ENCODE measurements at regions of chr6 and their contacts with region 1.

Region 1: DNA sequence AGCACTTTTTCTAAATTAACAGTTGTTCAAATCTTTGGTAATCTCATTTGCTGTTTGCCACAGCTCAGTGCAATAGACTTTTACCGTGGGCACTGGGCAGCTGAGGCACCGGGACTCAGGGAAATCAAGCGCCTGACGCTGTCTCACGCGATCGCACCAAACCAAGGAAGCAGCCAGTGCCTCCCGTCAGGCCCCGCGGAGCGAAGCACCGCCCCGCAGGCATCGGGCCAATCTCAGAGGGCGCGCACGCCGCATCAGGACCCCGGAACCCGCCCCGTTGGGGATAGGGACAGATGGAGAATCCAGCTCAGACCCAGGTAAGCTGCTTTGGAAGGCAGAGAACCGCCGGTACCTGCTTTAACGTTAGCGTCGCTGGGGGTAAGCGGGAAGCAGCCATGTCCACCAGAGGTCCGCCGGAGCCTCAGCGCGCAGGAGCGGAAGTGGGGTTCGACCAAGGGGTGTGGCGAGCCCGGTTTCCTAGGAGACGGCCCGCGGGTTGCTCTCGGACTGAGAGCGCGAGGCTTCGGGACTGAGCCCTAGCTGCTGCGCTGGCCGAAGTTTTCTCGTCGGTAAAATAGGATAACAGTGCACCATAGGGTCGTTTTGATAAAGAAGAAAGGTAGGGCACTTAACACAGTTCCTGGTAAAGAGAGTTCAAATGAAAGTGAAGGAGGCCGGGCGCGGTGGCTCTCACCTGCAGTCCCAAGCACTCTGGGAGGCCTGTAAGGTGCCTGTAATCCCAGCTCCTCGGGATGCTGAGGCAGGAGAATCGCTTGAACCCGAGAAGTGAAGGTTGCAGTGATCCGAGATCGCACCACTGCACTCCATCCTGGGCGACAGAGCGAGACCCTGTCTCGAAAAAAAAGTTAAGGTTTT is at the start of gene LYRM2:
- DNase-seq: peak; percentile 95
- H3K4me3 Mint-ChIP-seq: peak within 1 kb of the TSS; percentile 83
- H3K27ac Mint-ChIP-seq: peak within 1 kb of the TSS; percentile 96
- H3K4me1 Mint-ChIP-seq: peaks cover 28% of the 10 kb centered on the region
- H3K27me3 Mint-ChIP-seq: no peaks in the 10 kb centered on the region
- total RNA-seq, gene LYRM2: 15.8 to 18.3 TPM

Region 2: GRCh38 chr6:89352278-89353117 is 286.1 kb before region 1 on chr6 and contains the start of gene UBE2J1:
- CTCF ChIA-PET with region 1: no interaction called
- intact Hi-C with region 1: loop called (anchors 1 kb)
- DNase-seq: peak; percentile 71
- H3K4me3 Mint-ChIP-seq: peak within 1 kb of the TSS; percentile 90
- H3K27ac Mint-ChIP-seq: peak within 1 kb of the TSS; percentile 84
- H3K4me1 Mint-ChIP-seq: peaks cover 66% of the 10 kb centered on the region
- H3K27me3 Mint-ChIP-seq: no peaks in the 10 kb centered on the region
- total RNA-seq, gene UBE2J1: 10.8 to 10.9 TPM

Region 3: DNA sequence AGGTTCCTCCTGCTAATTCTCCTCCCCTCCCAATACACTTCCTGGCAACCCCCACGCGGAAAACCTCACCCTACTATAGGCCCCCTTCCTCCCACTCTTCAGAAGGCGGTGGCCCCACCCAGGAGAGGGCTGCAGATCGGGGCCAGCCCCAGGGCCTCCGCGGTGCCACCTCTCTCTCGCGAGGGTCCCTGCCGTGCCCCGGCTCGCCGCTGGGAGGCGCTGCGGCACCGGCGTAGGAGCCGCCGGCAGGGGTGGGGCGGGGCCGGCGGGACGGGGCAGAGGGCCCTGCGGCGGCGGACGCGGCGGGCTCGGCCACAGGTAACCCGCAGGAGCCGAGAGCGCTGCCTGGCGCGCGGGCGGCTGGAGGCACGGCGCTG is 205.7 kb before region 1 on chr6 and contains the start of gene ANKRD6:
- CTCF ChIA-PET with region 1: interaction called, 6 read pairs
- intact Hi-C with region 1: loop called (anchors 1 kb)
- DNase-seq: peak; percentile 77
- H3K4me3 Mint-ChIP-seq: peak within 1 kb of the TSS; percentile 69
- H3K27ac Mint-ChIP-seq: no peak within 1 kb of the TSS
- H3K4me1 Mint-ChIP-seq: peaks cover 10% of the 10 kb centered on the region
- H3K27me3 Mint-ChIP-seq: no peaks in the 10 kb centered on the region
- total RNA-seq, gene ANKRD6: 1.5 to 1.6 TPM

Region 4: GRCh38 chr6:89763550-89763949 is 125.0 kb after region 1 on chr6:
- CTCF ChIA-PET with region 1: no interaction called
- intact Hi-C with region 1: no loop called
- DNase-seq: no peak
- H3K4me3 Mint-ChIP-seq: no peak overlapping the region
- H3K27ac Mint-ChIP-seq: no peak overlapping the region
- H3K4me1 Mint-ChIP-seq: no peaks in the 10 kb centered on the region
- H3K27me3 Mint-ChIP-seq: no peaks in the 10 kb centered on the region

Region 5: DNA sequence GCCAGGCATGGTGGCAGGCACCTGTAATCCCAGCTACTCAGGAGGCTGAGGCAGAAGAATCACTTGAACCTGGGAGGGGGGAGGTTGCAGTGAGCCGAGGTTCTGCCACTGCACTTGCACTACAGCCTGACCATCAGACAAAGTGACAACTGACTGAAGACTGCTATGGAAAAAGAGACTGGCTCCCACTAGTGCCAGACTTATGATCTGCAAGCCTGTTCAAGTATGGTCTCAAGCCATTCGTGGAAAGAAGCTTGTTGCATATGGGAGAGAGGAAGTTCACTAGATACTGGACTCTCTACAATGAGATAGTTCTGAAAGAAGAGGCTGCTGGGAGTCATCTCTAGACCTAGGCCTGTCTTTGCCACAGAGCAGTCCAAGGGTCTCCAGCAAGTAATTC is 154.3 kb after region 1 on chr6:
- CTCF ChIA-PET with region 1: no interaction called
- intact Hi-C with region 1: loop called (anchors 5 kb)
- DNase-seq: peak; percentile 26
- H3K4me3 Mint-ChIP-seq: no peak overlapping the region
- H3K27ac Mint-ChIP-seq: no peak overlapping the region
- H3K4me1 Mint-ChIP-seq: peaks cover 25% of the 10 kb centered on the region
- H3K27me3 Mint-ChIP-seq: no peaks in the 10 kb centered on the region

Region 6: GRCh38 chr6:89829591-89830385 is 191.2 kb after region 1 on chr6 and contains the start of gene CASP8AP2:
- CTCF ChIA-PET with region 1: no interaction called
- intact Hi-C with region 1: loop called (anchors 1 kb)
- DNase-seq: peak; percentile 98
- H3K4me3 Mint-ChIP-seq: peak within 1 kb of the TSS; percentile 99
- H3K27ac Mint-ChIP-seq: peak within 1 kb of the TSS; percentile 96
- H3K4me1 Mint-ChIP-seq: peaks cover 33% of the 10 kb centered on the region
- H3K27me3 Mint-ChIP-seq: no peaks in the 10 kb centered on the region
- total RNA-seq, gene CASP8AP2: 27.4 to 30.2 TPM

Measured in activated naive CD4-positive, alpha-beta T cell treated with anti-CD3 and anti-CD28 coated beads for 36 hours (primary cell).